Left cardiac atrium (tissue), 4 donors: ENCODE measurements at regions of chr2 and their contacts with region 1.

Region 1: DNA sequence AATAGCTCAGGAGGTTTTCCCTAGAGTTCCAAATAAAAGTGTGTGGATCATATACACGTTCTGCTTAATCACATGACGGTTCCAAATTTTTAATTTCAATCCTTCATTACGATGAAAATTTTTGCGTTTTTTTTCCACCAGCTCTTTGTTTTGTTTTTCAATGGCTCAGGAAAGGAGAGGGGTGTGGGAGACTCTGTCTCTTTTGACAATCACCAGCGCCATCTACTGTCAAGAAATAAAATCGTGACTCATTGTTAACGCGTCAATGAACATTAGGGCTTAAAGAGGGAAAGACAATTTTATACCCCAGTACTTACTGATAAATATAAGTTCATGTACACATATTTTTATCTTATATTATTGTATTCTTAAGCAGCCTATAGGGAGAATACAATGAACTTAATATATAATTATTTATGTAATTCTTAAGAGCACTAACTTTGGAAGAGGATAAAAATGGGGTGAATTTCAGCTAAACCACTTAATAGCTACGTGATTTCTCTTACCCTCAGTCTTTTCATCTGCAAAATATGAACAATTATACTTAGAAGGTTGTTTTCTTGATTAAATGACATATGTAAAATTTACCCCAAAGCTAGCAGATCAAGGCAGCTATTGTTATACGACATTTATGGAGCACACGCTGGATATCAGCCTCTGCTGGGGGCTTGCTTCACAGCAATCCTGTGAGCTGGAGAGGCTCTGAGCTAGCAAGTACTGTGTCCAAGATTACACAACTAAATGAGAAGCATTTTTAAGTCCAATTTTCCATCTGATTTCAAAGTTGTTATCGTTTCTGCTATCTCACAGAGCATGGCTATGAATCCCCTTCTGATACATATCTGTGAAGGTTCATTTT is 47.4 kb upstream of the RMDN2 start:
- DNase-seq: no peak
- ATAC-seq: peak; percentile 68 to 77

Region 2: DNA sequence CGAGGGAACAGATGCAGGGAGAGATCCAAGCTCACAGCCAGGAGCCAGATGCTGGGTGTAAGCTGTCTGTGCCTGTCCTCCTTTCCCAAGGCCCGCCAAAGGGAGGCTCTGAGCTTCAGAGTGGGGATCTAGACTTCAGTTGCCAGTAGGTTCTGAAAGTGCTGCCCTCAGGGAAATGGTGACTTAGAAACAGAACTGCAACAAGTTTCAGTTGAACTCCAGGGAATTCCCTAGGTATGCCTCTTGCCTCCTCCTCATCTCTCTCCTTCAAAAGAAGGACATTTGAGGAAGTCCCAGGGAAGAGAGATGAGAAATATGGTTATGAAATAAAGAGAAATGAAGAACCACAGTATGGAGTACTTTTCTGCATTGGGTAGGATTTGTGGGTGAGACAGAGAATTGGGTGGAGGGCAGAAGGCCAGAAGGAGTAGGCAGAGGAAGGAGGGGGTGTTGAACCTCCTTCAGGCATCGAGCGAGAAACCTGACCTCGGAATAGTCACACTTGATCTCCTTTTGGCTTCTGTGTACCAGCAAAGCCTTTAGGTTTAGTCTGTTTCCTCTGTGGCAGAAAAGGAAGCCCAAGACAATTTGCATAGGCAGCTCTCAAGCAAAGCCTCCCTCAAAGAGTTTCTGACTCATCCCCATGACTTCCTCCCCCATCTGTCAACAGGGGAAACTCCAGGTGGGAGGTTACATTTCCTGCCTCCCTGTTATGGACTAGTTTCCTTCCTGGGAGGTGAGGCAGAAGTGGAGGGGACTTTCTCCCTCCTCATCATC is 487.5 kb before region 1 on chr2:
- intact Hi-C with region 1: loop called in 1 of 2 experiments (anchors 5 kb)
- DNase-seq: no peak
- ATAC-seq: peak; percentile 69 to 83

Region 3: DNA sequence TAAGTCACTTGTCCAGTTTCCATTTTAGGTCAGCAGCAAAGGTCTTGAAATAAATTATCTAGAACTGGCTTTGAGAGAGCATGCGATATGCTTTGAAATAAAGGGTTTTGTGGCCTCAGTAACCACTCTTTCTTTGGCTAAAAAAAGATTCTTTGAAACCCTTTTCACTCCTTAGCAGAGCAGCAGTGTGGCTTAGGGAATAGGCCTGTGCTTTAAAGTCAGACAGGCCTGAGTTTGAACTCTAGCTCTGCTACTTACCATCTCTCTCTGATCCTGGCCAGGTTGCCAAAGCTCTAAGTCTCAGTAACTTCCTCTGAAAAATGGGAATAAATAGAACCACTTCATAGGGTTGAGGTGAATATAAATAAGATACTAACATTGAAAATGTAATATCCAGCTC is 480.5 kb before region 1 on chr2:
- intact Hi-C with region 1: loop called (anchors 2 to 5 kb)
- DNase-seq: no peak
- ATAC-seq: no peak

Region 4: GRCh38 chr2:37414470-37414949 is 463.2 kb before region 1 on chr2:
- intact Hi-C with region 1: loop called (anchors 5 kb)
- DNase-seq: no peak
- ATAC-seq: peak; percentile 84 to 85

Region 5: GRCh38 chr2:37664231-37664643 is 213.4 kb before region 1 on chr2:
- intact Hi-C with region 1: loop called in 1 of 2 experiments (anchors 10 kb)
- DNase-seq: no peak
- ATAC-seq: no peak

Region 6: GRCh38 chr2:37688771-37689468 is 188.8 kb before region 1 on chr2:
- intact Hi-C with region 1: no loop called
- DNase-seq: peak; percentile 25
- ATAC-seq: peak; percentile 86 to 97

Region 7: DNA sequence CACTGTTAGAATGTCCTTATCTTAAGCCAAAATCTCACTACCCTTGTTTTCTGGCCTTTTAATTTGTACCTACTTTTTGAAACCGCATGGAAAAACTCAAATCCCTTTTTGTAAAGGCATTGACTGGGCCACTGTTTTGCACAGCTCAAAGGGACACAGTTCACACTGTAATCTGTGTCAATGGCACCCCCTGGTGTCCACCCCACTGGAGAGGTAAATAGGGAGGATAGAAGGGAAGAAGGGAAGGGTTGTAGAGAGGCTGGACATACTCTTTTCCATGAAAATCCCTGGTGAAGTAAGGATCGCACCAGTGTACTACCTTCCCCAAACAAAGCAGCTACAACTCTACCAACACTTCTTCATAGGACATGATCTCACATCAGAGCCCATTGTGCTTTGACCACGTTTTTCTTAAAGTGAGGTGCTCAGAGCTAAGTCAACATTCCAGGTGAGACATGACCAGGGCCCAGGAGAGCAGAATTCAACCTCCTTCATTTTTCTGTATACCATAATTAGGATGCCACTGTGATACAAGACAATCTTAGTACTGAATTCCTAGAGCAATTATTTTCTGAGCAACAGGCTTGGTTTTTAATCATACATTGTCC is 45.0 kb before region 1 on chr2:
- intact Hi-C with region 1: loop called in 1 of 2 experiments (anchors 5 kb)
- DNase-seq: peak; percentile 91
- ATAC-seq: peak; percentile 81